Dendritic cell treated with granulocyte-macrophage colony-stimulating factor and Interleukin-4, amounts not matched to agents 40 ng/mL and 50 ng/mL, for 4 days (primary cell): ENCODE measurements at regions of chr12 and their contacts with region 1.

Region 1: GRCh38 chr12:104358347-104359003 is 54.9 kb downstream of the EID3 start:
- H3K4me3 Mint-ChIP-seq: no peak overlapping the region
- H3K27ac Mint-ChIP-seq: no peak overlapping the region
- H3K4me1 Mint-ChIP-seq: no peaks in the 10 kb centered on the region
- H3K27me3 Mint-ChIP-seq: no peaks in the 10 kb centered on the region

Region 2: DNA sequence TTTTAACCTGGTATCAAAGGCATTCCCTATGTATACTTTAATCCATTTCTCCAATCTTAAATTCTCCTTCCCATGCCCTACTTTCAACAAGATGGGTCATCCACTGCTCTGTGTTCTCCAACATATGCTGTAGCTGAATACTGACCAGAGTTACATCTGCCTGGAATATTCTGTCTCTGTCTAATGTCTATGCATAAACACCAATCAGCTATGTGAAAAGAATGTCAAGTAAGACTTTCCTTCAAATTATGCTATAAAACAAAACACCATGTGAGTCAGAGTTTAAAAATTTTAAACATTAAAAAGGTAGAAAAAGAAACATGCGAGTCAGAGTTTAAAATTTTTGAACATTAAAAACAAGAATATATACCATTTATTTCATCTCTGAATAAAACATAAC is 536.7 kb before region 1 on chr12:
- intact Hi-C with region 1: no loop called
- H3K4me3 Mint-ChIP-seq: no peak overlapping the region
- H3K27ac Mint-ChIP-seq: no peak overlapping the region
- H3K4me1 Mint-ChIP-seq: peaks cover 28% of the 10 kb centered on the region
- H3K27me3 Mint-ChIP-seq: no peaks in the 10 kb centered on the region

Region 3: DNA sequence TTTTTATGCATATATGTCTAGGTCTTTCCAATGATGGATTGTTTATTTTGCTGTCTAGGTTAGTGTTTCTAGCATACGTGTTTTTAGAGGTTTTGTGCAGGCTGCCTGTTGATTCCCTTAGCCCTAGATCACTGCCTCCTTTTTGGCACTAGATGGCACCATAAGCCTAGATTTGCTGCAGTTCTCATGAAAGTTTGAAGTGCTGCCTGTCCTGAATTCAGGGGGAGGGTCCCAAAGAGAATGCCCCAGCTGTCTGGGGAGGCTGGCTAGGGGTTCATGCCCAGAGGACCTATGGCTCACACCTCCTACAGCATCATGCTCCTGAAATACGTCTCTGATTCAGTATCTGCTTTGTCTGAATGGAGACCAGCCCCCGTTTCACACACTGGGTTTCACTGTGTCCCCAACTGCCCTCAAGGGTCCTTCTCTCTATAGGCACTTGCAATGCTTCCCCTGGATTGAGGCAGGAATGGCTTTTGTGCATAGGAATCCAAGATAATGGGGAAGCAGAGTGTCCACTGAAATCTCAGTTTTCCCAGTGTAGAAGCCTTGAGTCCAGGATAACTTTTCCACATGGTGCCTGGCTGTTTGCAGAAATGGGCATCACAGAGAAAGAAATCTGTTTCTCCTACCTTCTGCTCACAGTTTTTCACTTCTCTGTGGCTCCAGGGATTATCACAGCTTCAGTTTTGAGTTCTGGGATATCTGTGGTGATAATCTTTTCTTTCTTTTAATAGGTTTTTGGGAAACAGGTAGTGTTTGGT is 157.1 kb before region 1 on chr12:
- intact Hi-C with region 1: loop called (anchors 1 kb)
- H3K4me3 Mint-ChIP-seq: no peak overlapping the region
- H3K27ac Mint-ChIP-seq: no peak overlapping the region
- H3K4me1 Mint-ChIP-seq: peaks cover 7% of the 10 kb centered on the region
- H3K27me3 Mint-ChIP-seq: peaks cover 2% of the 10 kb centered on the region